ENCODE measurements at regions of chrX and their contacts with region 1.

Region 1: DNA sequence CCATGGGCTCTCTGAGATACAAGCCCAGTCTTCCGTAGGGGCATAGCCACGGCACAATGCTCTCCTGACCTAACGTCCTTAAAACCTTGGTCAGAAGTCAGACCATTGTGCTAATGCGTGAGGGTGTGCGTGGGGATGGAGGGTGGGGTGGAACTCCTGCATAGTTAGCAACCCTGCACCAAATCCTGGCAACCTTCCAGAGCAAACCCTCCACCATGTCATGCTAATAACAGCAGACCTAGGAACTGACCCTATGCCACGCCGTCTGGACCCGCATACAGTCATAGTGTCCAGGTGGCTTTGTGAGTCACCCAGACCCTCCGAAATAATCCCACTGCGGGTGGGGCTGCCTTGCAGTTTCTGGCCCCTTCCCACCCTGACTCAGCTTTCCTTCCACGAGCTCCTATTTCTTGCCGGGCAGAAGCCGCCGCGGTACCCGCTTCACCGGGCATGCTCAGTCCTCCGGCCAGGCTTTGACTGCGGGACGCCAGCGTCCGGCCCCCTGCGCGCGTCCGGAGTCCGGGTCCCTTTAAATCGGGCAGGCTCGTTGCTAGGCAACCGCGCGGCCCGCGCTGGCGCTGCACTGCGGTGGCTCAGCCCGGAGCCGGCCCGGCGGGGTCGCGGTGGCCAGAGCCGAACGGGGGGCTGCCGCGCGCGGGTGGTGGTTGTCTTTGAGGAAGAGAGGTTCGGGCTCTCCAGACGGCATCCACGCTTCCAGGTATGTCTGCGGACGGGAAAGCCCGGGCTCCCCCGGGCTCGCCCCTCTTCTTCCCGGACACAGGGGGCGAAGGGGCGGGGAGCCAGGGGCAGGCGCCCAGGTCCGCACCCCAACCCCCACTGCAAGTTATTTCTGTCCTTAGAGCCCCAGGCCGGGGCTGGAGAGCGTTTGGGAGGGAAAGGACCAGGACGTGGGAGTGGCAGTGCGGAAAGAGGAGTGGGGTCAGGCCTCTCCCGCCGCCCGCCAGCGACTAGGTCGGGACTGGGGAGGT is at the start of gene CCDC160:
- DNase-seq: no peak
- H3K4me3 ChIP-seq: no peak within 1 kb of the TSS
- CTCF ChIP-seq: no peak
- POLR2A ChIP-seq: no peak
- total RNA-seq, gene CCDC160: 0.25 to 2.1 (median 0.51) TPM

Region 2: GRCh38 chrX:133033010-133033409 is 1203.9 kb before region 1 on chrX:
- intact Hi-C with region 1: loop called (anchors 5 kb)
- DNase-seq: no peak
- H3K4me3 ChIP-seq: no peak overlapping the region
- CTCF ChIP-seq: no peak
- POLR2A ChIP-seq: no peak

Region 3: GRCh38 chrX:134095366-134095765 is 141.6 kb before region 1 on chrX:
- intact Hi-C with region 1: no loop called
- DNase-seq: no peak
- H3K4me3 ChIP-seq: no peak overlapping the region
- CTCF ChIP-seq: no peak
- POLR2A ChIP-seq: no peak

Measured in lower leg skin (tissue), 4 donors.